Activated naive CD4-positive, alpha-beta T cell treated with anti-CD3 and anti-CD28 coated beads for 36 hours (primary cell): ENCODE measurements at regions of chr15 and their contacts with region 1.

Region 1: GRCh38 chr15:40807028-40807887 is at the starts of genes DNAJC17 and ZFYVE19:
- DNase-seq: peak; percentile 97
- H3K4me3 Mint-ChIP-seq: peak within 1 kb of the TSS; percentile 86
- H3K27ac Mint-ChIP-seq: peak within 1 kb of the TSS; percentile 93
- H3K4me1 Mint-ChIP-seq: peaks cover 23% of the 10 kb centered on the region
- H3K27me3 Mint-ChIP-seq: no peaks in the 10 kb centered on the region
- total RNA-seq, gene DNAJC17: 25.9 to 28.1 TPM
- total RNA-seq, gene ZFYVE19: 15.4 to 17.0 TPM

Region 2: GRCh38 chr15:40382580-40383456 is 424.4 kb before region 1 on chr15 and contains the start of gene KNSTRN:
- CTCF ChIA-PET with region 1: no interaction called
- intact Hi-C with region 1: loop called (anchors 5 kb)
- DNase-seq: peak; percentile 97
- H3K4me3 Mint-ChIP-seq: peak within 1 kb of the TSS; percentile 94
- H3K27ac Mint-ChIP-seq: peak within 1 kb of the TSS; percentile 72
- H3K4me1 Mint-ChIP-seq: peaks cover 18% of the 10 kb centered on the region
- H3K27me3 Mint-ChIP-seq: no peaks in the 10 kb centered on the region
- total RNA-seq, gene KNSTRN: 60.7 to 62.1 TPM

Region 3: GRCh38 chr15:40593588-40594428 is 213.4 kb before region 1 on chr15 and contains the start of gene KNL1:
- CTCF ChIA-PET with region 1: interaction called, 3 read pairs
- intact Hi-C with region 1: loop called (anchors 1 kb)
- DNase-seq: peak; percentile 95
- H3K4me3 Mint-ChIP-seq: peak within 1 kb of the TSS; percentile 97
- H3K27ac Mint-ChIP-seq: peak within 1 kb of the TSS; percentile 99
- H3K4me1 Mint-ChIP-seq: peaks cover 23% of the 10 kb centered on the region
- H3K27me3 Mint-ChIP-seq: peaks cover 5% of the 10 kb centered on the region
- total RNA-seq, gene KNL1: 31.0 to 32.7 TPM

Region 4: GRCh38 chr15:40754883-40755811 is 52.1 kb before region 1 on chr15 and contains the start of gene RMDN3:
- CTCF ChIA-PET with region 1: interaction called, 4 read pairs
- intact Hi-C with region 1: loop called (anchors 1 kb)
- DNase-seq: peak; percentile 95
- H3K4me3 Mint-ChIP-seq: peak within 1 kb of the TSS; percentile 94
- H3K27ac Mint-ChIP-seq: peak within 1 kb of the TSS; percentile 98
- H3K4me1 Mint-ChIP-seq: peaks cover 25% of the 10 kb centered on the region
- H3K27me3 Mint-ChIP-seq: no peaks in the 10 kb centered on the region
- total RNA-seq, gene RMDN3: 17.8 to 19.2 TPM

Region 5: DNA sequence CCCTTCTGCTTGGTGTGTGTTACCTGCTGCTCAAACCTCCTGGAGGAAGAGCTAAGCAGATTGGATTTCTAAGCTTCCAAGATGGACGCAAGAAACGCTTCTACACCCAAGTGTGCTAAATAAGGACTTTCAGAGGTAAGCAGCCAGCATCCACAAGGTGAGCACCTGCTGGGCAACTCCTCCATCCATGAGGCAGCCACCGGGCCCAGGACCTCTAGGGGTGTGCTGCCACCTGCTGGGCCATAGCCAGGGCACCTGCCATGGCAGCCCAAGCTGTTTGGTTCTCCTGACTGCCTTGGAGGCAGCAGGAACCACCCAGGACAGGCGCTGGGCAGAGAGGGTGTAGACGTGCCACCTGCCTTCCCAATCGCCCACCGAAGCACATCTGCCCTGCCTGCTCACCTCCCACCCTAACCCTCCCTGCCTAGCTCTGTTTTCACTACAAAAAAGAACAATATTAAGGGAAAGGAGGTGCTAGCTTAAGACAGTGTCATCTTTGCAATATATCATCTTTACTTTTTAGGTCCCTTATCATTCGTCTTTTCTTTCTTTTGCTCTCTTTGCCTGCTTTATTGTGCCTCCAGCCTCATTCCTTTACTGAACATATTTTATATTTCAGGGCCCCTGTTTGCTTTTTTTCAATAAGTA is 24.6 kb before region 1 on chr15:
- CTCF ChIA-PET with region 1: interaction called, 7 read pairs
- intact Hi-C with region 1: loop called (anchors 1 kb)
- DNase-seq: peak; percentile 88
- H3K4me3 Mint-ChIP-seq: no peak overlapping the region
- H3K27ac Mint-ChIP-seq: no peak overlapping the region
- H3K4me1 Mint-ChIP-seq: peaks cover 18% of the 10 kb centered on the region
- H3K27me3 Mint-ChIP-seq: no peaks in the 10 kb centered on the region

Region 6: GRCh38 chr15:40952901-40953712 is 145.8 kb after region 1 on chr15 and contains the start of gene CHAC1:
- CTCF ChIA-PET with region 1: no interaction called
- intact Hi-C with region 1: loop called (anchors 2 kb)
- DNase-seq: peak; percentile 99
- H3K4me3 Mint-ChIP-seq: peak within 1 kb of the TSS; percentile 94
- H3K27ac Mint-ChIP-seq: peak within 1 kb of the TSS; percentile 93
- H3K4me1 Mint-ChIP-seq: peaks cover 35% of the 10 kb centered on the region
- H3K27me3 Mint-ChIP-seq: no peaks in the 10 kb centered on the region
- total RNA-seq, gene CHAC1: 19.8 to 20.2 TPM

Region 7: GRCh38 chr15:41230650-41231533 is 423.6 kb after region 1 on chr15 and contains the starts of genes CHP1 and EXD1:
- CTCF ChIA-PET with region 1: no interaction called
- intact Hi-C with region 1: loop called (anchors 5 kb)
- DNase-seq: peak; percentile 98
- H3K4me3 Mint-ChIP-seq: peak within 1 kb of the TSS; percentile 88
- H3K27ac Mint-ChIP-seq: peak within 1 kb of the TSS; percentile 87
- H3K4me1 Mint-ChIP-seq: peaks cover 22% of the 10 kb centered on the region
- H3K27me3 Mint-ChIP-seq: no peaks in the 10 kb centered on the region
- total RNA-seq, gene CHP1: 37.7 to 39.8 TPM
- total RNA-seq, gene EXD1: not detected